HCT116 (cell line): ENCODE measurements at regions of chr15 and their contacts with region 1.

Region 1: DNA sequence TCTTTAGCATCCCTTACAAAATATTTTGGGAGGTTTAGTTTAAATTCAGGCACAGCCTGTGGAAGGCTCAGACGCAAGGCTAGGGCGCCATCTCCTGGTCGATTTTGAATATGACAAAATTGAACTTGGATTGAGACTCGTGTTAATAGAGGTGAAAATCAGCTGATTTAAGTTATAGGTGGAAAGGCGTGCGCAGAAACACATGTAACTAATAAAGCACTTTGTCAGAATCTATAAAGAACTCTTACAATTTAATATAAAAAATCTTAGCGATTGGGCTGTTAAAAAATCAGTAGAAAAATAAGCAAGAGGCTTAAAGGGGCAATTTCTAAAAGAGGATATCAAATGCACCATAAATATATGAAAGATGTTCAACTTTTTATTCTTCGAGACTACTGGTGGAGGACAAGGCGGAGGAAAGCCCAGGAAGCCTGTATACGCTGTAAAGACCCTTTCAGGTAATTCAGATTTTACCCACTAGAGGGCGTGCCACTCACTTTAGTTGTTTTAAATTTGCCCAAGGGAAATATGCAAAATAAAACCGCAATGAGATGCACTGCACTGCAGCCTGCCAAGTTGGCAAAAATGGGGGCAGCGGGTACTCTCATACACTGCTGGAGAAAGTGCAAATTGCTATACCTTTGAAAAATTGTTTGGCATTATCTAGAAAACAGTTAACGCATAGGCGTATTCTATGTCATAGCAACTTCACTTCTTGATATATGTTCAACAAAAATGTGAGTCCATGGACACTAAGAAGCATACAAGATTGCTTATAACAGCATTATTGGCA is 64.7 kb downstream of the SLC30A4 start:
- DNase-seq: peak; percentile 79
- ATAC-seq: peak; percentile 63
- H3K4me3 ChIP-seq: peak overlapping the region; percentile 42 to 48
- H3K27ac ChIP-seq: no peak overlapping the region
- H3K4me1 ChIP-seq: peaks cover 28 to 50% of the 10 kb centered on the region in 2 experiments
- H3K27me3 ChIP-seq: no peaks in the 10 kb centered on the region
- CTCF ChIP-seq: peak; percentile 61 to 97 (median 64)
- POLR2A ChIP-seq: no peak
- RAD21 ChIP-seq: peak; percentile 93

Region 2: DNA sequence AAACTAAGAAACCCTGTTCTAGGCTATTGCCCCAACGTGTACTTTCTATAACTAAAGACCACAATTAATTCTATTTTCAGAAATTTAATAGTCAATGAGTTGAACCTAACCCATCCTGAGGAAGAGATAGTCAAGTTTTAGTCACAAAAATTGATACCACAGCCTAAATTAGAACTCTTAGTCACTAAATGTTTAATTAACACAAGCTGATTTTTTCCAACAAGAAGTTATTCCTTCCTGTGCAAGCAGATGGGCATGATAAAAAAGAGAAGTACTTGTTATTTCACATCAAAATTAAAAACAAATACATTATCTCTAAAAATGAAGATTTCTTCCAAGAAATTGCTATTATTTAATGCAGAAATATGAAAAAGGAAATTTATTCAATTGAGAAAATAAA is 539.7 kb before region 1 on chr15:
- CTCF ChIA-PET with region 1: no interaction called
- POLR2A ChIA-PET with region 1: no interaction called
- RAD21 ChIA-PET with region 1: no interaction called
- intact Hi-C with region 1: no loop called
- DNase-seq: no peak
- ATAC-seq: no peak
- H3K4me3 ChIP-seq: no peak overlapping the region
- H3K27ac ChIP-seq: no peak overlapping the region
- H3K4me1 ChIP-seq: no peaks in the 10 kb centered on the region
- H3K27me3 ChIP-seq: no peaks in the 10 kb centered on the region
- CTCF ChIP-seq: no peak
- POLR2A ChIP-seq: no peak
- RAD21 ChIP-seq: no peak

Region 3: DNA sequence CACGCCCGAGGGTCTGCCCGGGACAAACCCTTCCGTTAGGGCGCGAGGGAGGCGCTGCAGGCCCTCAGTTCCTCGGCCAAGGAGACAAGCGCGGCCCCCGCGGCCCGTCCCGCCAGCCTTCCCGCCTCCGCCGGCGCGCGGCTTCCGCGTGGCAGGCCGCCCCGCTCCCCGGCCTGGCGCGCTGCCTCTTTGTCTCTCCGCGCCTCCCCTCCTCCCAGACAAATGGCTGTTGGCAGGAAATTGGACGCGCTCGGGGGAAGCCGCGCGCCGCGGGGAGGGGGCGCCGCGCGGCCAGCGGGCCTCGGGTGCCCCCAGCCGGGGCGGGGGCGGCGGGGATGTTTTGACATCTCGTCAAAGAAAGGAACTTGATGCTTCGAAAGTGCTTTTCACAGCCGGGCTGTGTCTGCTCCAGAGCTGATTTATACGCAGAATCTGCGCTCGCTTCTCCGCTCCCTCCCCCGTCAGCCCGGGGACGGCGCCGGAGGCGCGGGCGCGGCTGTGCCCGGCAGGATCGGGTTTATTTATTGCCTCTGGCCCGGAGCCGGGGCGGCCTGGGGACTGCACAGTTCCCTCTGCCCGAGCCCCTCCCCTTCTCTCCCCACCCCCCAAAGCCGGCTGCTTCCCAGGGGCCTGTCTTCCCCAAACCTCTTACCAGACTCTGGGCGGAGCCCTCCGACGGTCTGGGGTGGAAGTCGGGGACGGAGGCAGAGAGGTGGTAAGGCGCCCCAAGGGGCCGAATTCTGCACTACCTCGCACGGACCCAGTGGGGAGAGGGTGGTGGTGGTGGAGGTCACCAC is 290.8 kb before region 1 on chr15:
- CTCF ChIA-PET with region 1: interaction called, 42 read pairs
- POLR2A ChIA-PET with region 1: interaction called, 3 read pairs
- RAD21 ChIA-PET with region 1: no interaction called
- intact Hi-C with region 1: loop called (anchors 1 kb)
- DNase-seq: peak; percentile 59
- ATAC-seq: peak; percentile 85
- H3K4me3 ChIP-seq: peak overlapping the region; percentile 73 to 74
- H3K27ac ChIP-seq: peak overlapping the region; percentile 90
- H3K4me1 ChIP-seq: peaks cover 15 to 32% of the 10 kb centered on the region in 2 experiments
- H3K27me3 ChIP-seq: no peaks in the 10 kb centered on the region
- CTCF ChIP-seq: peak; percentile 63 to 79 (median 70); a peak in 5 of 6 replicates
- POLR2A ChIP-seq: no peak
- RAD21 ChIP-seq: peak; percentile 17; the same call in 1 of the 2 replicates

Region 4: DNA sequence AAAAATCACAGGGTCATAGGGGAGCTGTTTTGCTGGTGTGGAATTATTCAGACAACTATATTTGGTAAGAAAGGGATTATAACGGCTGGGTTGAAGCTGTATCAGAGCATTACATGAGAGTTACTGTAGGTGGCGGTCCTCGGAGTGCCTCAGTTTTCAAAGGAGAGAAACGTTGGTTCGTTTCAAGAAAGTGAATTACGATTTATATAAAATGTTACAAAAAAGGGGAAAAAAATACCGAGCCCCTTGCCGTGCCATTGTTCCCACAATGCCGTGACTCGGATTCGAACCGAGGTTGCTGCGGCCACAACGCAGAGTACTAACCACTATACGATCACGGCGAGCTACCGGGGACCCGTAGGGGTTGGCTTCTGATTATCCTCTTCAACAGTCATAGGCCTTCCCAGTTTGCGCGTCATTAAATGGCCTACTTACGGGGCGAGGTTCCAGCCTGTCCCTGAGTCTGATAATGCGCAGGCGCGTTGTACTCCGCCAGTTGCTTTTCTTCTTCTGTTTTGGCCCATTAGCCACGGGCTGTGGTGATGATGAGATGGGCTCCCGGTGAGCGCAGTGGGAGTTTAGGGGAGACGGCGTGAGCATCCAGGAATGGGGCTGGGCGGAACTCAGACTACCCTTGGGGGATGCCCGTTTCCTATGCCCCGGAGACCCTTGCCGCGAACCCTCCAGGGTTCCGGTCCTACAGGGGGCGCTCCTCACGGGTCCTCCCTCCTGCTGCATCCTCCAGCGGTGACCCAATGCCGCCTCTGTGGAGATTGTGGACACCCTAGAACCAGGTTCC is 259.3 kb before region 1 on chr15:
- CTCF ChIA-PET with region 1: interaction called, 12 read pairs
- POLR2A ChIA-PET with region 1: no interaction called
- RAD21 ChIA-PET with region 1: no interaction called
- intact Hi-C with region 1: loop called (anchors 2 kb)
- DNase-seq: peak; percentile 94
- ATAC-seq: peak; percentile 71
- H3K4me3 ChIP-seq: peak overlapping the region; percentile 58 to 62
- H3K27ac ChIP-seq: peak overlapping the region; percentile 76
- H3K4me1 ChIP-seq: peaks cover 11 to 36% of the 10 kb centered on the region in 2 experiments
- H3K27me3 ChIP-seq: no peaks in the 10 kb centered on the region
- CTCF ChIP-seq: peak in 2 of 3 experiments; percentile 79 to 86; a peak in 4 of 6 replicates
- POLR2A ChIP-seq: peak; percentile 52
- RAD21 ChIP-seq: no peak

Region 5: GRCh38 chr15:45307230-45307924 is 150.5 kb before region 1 on chr15:
- CTCF ChIA-PET with region 1: interaction called, 3 read pairs
- POLR2A ChIA-PET with region 1: no interaction called
- RAD21 ChIA-PET with region 1: no interaction called
- intact Hi-C with region 1: loop called (anchors 1 kb)
- DNase-seq: peak; percentile 32
- ATAC-seq: peak; percentile 67
- H3K4me3 ChIP-seq: peak overlapping the region in 1 of 2 experiments; percentile 40; a peak in 3 of 4 replicates
- H3K27ac ChIP-seq: no peak overlapping the region
- H3K4me1 ChIP-seq: peaks cover 0 to 4% of the 10 kb centered on the region in 2 experiments; a peak in 1 of 4 replicates
- H3K27me3 ChIP-seq: no peaks in the 10 kb centered on the region
- CTCF ChIP-seq: peak; percentile 45 to 68 (median 59); a peak in 5 of 6 replicates
- POLR2A ChIP-seq: no peak
- RAD21 ChIP-seq: peak; percentile 68

Region 6: DNA sequence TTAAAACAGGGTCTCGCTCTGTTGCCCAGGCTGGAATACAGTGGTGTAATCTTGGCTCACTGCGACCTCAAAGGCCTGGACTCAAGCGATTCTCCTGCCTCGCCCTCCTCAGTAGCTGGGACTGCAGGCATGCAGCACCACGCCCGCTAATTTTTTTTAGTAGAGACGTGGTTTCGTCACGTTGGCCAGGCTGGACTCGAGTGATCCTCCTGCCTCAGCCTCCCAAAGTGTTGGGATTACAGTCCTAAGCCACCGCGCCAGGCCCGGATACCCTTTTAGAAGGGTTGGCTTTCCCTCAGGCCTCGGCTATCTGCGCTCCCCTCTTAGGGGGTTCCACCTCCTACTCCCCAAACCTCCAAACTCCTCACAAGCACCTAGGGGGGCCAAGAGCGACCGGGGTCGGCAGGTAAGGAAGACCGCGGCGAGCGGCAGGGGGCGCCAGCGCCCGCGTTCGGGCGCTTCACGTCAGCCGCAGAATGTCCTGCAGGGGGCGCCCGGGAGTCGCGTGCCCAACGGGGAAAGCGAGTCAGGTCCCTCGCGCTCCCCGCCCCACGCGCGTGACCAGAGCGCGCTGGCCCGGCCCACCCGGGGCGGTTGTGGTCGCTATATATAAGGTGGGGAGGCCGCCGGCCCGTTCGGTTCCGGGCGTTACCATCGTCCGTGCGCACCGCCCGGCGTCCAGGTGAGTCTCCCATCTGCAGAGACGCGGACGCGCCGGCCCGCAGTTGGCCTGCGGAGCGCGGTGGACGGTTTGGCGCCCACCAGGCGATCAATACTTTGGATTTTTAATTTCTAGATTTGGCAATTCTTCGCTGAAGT is 27.7 kb before region 1 on chr15:
- CTCF ChIA-PET with region 1: interaction called, 57 read pairs
- POLR2A ChIA-PET with region 1: no interaction called
- RAD21 ChIA-PET with region 1: interaction called, 3 read pairs
- intact Hi-C with region 1: loop called (anchors 1 kb)
- DNase-seq: no peak
- ATAC-seq: peak; percentile 93
- H3K4me3 ChIP-seq: peak overlapping the region; percentile 26 to 43
- H3K27ac ChIP-seq: no peak overlapping the region
- H3K4me1 ChIP-seq: peaks cover 5 to 25% of the 10 kb centered on the region in 2 experiments; a peak in 3 of 4 replicates
- H3K27me3 ChIP-seq: no peaks in the 10 kb centered on the region
- CTCF ChIP-seq: peak; percentile 99 to 100 (median 100)
- POLR2A ChIP-seq: no peak
- RAD21 ChIP-seq: peak; percentile 91

Region 7: DNA sequence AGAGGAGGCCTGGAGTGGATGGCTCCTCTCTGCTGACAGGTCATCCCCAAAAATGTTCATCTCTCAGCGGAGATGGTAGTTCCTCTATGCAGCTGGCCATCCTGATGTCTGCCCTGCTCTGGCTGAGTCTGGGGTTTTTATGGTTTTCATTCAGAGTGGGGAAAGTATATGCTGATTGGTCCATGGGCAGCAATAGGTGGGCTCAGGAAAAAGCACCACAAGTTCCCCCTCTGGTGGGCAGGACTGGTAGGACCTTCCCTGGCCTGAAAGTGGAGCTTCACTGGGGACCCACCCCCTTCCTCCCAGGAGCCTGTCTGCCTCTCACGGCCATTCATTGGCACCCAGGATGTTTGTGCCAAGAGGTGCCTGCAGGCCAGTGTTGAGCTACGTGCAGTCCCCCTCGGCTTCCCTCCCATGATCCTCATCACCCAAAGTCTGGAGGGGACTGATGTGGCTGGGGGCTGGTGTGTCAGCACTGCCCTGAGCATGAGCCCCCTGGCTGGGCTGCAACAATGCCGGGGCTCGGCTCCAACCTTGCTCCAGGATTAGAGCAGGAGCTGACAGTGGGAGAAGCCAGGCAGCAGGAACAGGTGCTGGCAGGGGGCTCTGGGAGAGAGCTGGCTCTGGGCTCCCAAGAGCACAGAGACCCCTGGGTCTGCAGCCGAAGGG is 116.3 kb after region 1 on chr15:
- CTCF ChIA-PET with region 1: interaction called, 13 read pairs
- POLR2A ChIA-PET with region 1: no interaction called
- RAD21 ChIA-PET with region 1: no interaction called
- intact Hi-C with region 1: no loop called
- DNase-seq: peak; percentile 53
- ATAC-seq: peak; percentile 99
- H3K4me3 ChIP-seq: no peak overlapping the region
- H3K27ac ChIP-seq: no peak overlapping the region
- H3K4me1 ChIP-seq: peaks cover 4 to 10% of the 10 kb centered on the region in 2 experiments; a peak in 3 of 4 replicates
- H3K27me3 ChIP-seq: no peaks in the 10 kb centered on the region
- CTCF ChIP-seq: peak; percentile 29 to 79 (median 63); a peak in 4 of 6 replicates
- POLR2A ChIP-seq: no peak
- RAD21 ChIP-seq: peak; percentile 34